GM13976 (cell line): ENCODE measurements at regions of chr1 and their contacts with region 1.

Region 1: GRCh38 chr1:56584910-56585528 is 5.7 kb upstream of the PLPP3 start:
- DNase-seq: peak; percentile 55
- CTCF ChIP-seq: peak; percentile 62

Region 2: DNA sequence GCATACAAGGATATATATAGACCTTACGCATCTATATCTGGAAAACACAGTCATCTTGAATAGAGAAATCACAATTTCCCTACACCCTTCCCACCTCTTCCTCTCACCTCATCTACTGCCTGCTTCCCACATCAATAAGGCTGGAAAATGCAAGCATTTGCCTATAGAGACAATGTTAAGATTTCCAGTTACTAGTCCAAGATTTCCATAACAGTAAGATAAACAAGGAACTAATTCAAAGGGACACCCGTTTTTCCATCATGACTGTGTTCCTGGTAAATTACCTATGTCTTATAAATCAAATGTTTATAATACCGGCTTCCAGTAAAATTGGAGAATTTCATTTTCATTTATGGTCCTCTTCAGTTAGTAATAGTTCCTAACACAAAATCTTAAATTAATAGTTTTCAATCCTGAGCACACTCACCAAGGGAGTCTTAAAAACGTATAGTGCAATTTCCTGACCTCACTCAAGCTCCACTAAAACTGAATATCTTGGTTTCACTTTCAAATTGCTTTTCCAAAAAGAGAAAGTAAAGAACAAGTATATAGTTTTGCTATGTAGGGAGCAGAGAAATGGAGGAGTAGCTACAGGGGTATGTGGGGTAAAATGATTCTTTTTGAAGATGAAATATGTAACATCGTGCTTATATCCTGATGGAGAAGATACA is 404.4 kb before region 1 on chr1:
- in situ Hi-C with region 1: no loop called
- DNase-seq: no peak
- CTCF ChIP-seq: no peak

Region 3: GRCh38 chr1:56411484-56412180 is 173.4 kb before region 1 on chr1:
- in situ Hi-C with region 1: loop called (anchors 10 kb)
- DNase-seq: no peak
- CTCF ChIP-seq: no peak

Region 4: DNA sequence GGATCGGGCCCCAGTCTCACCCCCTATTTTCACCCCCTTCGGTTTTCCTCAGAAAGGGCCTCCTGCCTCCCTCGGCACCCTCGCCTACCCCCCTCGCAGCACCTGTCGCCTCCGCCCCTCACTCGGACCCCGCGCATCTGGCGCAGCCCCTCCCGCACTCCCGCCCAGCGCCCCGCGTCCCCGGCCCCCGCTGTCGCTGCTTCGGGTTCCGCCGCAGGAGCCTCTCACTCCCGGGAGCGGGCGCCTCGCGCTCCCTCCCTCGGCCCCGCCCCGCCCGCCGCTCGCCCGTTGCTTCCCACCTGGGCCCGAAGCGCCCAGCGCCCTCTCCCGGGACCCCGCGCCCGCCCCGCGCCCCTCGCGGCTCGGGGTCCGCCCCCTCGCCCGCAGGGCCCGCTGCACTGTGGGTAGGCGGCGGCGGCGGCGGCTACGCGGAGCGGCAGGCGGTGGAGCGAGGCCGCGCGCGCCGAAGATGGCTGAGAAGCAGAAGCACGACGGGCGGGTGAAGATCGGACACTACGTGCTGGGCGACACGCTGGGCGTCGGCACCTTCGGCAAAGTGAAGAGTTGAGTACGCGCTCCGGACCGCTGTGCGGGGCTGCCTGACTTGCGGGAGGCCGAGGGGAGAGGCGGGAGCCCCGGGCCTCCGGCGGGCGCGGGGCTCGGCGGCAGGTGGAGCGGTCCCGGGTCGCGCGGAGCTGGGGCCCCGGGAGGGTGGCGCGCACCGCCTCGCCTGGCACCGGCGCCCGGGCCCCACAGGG is 60.1 kb after region 1 on chr1 and contains the start of gene PRKAA2:
- in situ Hi-C with region 1: no loop called
- DNase-seq: peak; percentile 44
- CTCF ChIP-seq: no peak

Region 5: GRCh38 chr1:56788588-56788987 is 203.6 kb after region 1 on chr1:
- in situ Hi-C with region 1: no loop called
- DNase-seq: no peak
- CTCF ChIP-seq: no peak

Region 6: GRCh38 chr1:57142999-57143398 is 558.0 kb after region 1 on chr1:
- in situ Hi-C with region 1: no loop called
- DNase-seq: no peak
- CTCF ChIP-seq: no peak